KBM-7 (cell line): ENCODE measurements at regions of chr6 and their contacts with region 1.

Region 1: GRCh38 chr6:108518714-108519576 is 41.8 kb upstream of the FOXO3 start:
- DNase-seq: peak; percentile 56

Region 2: DNA sequence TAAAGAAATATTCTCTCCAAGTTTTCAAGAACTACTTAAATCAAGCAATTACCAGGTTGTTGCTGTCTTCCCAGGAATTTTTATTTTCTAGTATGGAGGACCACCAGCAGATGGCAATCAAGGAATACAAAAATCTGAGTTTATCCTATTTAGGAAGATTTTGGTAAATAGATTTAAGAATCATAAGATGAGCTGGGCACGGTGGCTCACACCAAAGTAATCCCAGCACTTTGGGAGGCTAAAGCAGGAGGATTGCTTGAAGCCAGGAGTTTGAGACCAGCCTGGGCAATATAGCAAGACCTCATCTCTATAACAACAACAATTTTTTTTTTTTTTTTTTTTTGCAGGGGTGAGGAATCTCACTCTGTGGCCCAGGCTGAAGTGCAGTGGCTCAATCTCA is 541.7 kb before region 1 on chr6:
- in situ Hi-C with region 1: loop called (anchors 25 kb)
- DNase-seq: peak; percentile 62

Region 3: DNA sequence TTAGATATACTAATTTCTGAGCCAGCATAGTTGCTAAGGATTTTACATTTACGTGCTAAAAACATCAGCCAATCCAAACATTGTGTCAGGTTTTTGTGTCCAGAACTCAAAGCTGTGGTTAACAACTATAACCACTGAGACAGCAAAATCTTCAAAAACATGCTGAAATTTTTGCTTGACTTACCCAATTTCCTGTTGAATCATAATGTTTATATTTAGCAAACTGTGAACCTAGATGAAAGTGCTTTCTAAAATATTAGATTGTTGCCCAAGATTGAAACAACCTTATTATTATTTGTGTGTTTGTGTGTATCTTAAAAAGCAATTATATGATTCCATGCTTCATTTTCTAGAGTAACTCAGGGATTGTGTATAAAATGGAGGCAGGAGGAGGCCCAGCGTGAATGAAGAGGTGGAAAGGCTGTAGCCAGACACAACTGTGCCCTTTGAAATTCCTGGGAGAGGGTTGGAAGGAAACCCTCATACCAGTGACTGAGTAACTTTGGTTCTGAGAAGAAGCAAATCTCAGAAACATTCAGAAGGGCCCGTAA is 377.2 kb after region 1 on chr6:
- in situ Hi-C with region 1: no loop called
- DNase-seq: peak; percentile 77